Activated CD4-positive, alpha-beta memory T cell treated with anti-CD3 and anti-CD28 coated beads, Interleukin-2, amount 10 ng/mL, durations not matched to agents 7 days and 5 days (primary cell): ENCODE measurements at regions of chr22 and their contacts with region 1.

Region 1: GRCh38 chr22:29689880-29690213 is 30.0 kb upstream of the CABP7 start:
- DNase-seq: peak; percentile 47
- H3K4me3 Mint-ChIP-seq: no peak overlapping the region
- H3K27ac Mint-ChIP-seq: no peak overlapping the region
- H3K4me1 Mint-ChIP-seq: peaks cover 2% of the 10 kb centered on the region
- H3K27me3 Mint-ChIP-seq: no peaks in the 10 kb centered on the region

Region 2: GRCh38 chr22:29701155-29701999 is 11.5 kb after region 1 on chr22:
- CTCF ChIA-PET with region 1: interaction called, 16 read pairs
- POLR2A ChIA-PET with region 1: no interaction called
- DNase-seq: peak; percentile 50
- H3K4me3 Mint-ChIP-seq: no peak overlapping the region
- H3K27ac Mint-ChIP-seq: peak overlapping the region; percentile 65
- H3K4me1 Mint-ChIP-seq: peaks cover 24% of the 10 kb centered on the region
- H3K27me3 Mint-ChIP-seq: no peaks in the 10 kb centered on the region